Activated CD8-positive, alpha-beta T cell treated with anti-CD3 and anti-CD28 coated beads, Interleukin-2, amount 10 ng/mL, durations not matched to agents 7 days and 5 days (primary cell): ENCODE measurements at regions of chr11 and their contacts with region 1.

Region 1: DNA sequence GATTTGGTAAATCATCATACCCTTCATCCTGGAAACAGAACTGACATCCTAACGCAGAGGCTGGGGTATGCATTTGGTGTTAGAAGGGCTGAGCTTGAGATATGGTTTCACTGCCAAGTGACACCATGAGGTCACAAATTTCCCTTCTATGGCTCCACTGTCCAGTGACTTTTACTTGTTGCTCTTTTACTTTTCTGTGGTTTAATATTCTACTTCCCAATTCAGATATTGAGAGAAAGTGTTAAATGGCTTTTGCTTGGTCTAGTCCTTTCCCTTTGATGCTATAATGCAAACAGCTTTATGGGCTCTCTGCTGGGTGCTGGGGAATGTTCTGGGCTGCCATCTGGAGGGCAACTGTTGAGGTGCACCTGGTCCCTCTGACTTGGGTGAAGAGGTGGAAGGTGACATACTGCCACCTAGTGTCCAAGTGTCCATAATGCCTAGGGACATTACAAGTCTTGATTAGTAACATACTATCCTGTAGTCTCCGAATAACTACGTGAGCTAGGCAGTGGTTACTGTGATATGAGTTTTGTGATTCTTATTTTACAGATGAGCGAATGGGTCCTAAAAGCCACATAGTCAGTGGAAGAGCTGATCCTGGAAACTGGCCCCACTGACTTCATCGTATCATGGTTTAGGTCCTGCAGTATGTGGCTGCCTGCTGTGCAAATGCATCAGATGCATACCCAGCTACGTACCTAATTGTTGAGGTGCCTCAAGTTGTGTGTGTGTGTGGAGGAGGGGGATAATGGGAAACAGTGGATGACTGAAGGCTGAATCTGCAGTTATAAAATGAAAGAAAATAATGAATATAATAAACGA is 149.1 kb upstream of the RAG2 start:
- DNase-seq: peak; percentile 94
- ATAC-seq: peak; percentile 99
- H3K4me3 Mint-ChIP-seq: no peak overlapping the region
- H3K27ac Mint-ChIP-seq: no peak overlapping the region
- H3K4me1 Mint-ChIP-seq: no peaks in the 10 kb centered on the region
- H3K27me3 Mint-ChIP-seq: peaks cover 27% of the 10 kb centered on the region

Region 2: DNA sequence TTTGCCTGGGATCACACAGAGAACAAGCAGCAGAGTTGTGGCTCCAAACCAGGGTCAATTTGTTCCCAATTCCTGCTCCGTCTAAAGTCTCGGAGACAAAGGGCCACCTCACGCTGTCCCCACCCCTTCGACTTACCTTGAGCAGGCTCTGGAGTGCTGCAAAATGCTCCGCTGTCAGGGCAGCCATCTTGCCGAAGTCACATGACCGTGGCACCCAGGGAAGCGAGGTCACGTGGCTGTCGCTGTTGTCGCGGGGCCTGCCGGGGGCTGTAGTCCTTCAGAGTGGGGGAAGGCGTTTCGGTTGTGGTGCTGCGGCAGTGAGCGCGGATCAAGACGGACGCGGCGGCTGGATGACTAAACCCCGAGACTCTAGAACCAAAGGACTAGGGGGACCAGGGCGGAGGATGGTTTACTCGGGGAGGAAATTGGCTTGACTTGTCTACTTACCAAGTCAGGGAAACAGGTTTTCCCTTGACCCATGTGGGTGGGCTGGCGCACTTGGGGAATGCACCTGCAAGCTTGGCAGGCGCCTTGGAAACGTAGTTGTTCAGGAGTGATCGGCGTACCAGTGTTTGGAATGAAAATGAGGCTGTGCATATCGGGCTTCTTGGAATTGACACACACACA is 457.8 kb before region 1 on chr11 and contains the start of gene COMMD9:
- CTCF ChIA-PET with region 1: interaction called, 26 read pairs
- POLR2A ChIA-PET with region 1: no interaction called
- DNase-seq: peak; percentile 97
- ATAC-seq: peak; percentile 99
- H3K4me3 Mint-ChIP-seq: peak within 1 kb of the TSS; percentile 92
- H3K27ac Mint-ChIP-seq: peak within 1 kb of the TSS; percentile 89
- H3K4me1 Mint-ChIP-seq: peaks cover 28% of the 10 kb centered on the region
- H3K27me3 Mint-ChIP-seq: peaks cover 3% of the 10 kb centered on the region
- total RNA-seq, gene COMMD9: 44.6 to 47.5 TPM

Region 3: DNA sequence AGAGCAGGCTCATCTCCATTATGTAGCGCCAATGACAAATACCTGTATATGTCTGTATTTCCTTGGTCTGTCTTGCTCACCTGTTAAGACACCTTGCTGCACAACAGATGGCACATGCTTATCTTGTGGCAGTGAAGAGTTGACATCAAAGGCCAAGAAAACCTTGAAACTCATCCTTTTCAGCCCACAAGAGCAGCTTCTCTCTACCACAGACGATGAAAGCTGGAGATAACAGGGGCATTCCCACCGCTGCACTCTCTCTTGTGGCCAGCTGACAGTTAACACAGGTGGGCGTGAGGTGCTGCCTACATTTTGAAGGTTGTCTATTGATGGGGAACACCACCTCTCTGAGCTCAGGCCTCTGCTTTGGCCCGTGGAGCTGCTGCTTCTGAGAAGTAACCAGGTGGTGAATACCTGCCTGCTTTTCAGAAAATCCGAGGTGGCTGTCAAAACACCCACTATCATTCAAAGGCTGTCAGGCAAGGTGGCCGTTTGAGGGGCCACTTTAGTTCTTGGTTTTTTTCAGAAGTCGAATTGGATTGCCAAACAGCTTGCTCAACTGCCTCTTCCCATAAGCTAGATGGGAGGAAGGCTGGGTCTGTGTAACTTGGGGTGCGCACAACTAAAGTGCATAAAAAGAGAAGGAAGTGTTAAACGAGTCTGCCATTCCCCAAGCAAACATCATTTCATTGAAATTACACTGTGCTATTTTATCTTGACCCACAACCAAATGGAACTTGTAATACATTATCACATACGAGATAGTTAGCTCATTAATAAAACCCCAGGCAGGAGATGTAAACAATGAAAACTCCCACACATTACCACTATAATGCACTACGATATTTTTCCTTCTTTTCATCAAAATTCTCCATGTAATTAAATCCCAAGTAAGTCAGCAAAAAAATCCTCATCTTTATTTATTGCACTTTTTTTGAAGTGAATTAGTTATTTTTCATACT is 62.0 kb before region 1 on chr11:
- CTCF ChIA-PET with region 1: interaction called, 12 read pairs
- POLR2A ChIA-PET with region 1: no interaction called
- DNase-seq: peak; percentile 42
- ATAC-seq: peak; percentile 47
- H3K4me3 Mint-ChIP-seq: no peak overlapping the region
- H3K27ac Mint-ChIP-seq: no peak overlapping the region
- H3K4me1 Mint-ChIP-seq: peaks cover 11% of the 10 kb centered on the region
- H3K27me3 Mint-ChIP-seq: peaks cover 50% of the 10 kb centered on the region

Region 4: GRCh38 chr11:36711106-36711825 is 35.8 kb before region 1 on chr11:
- CTCF ChIA-PET with region 1: interaction called, 10 read pairs
- POLR2A ChIA-PET with region 1: no interaction called
- DNase-seq: no peak
- ATAC-seq: no peak
- H3K4me3 Mint-ChIP-seq: no peak overlapping the region
- H3K27ac Mint-ChIP-seq: no peak overlapping the region
- H3K4me1 Mint-ChIP-seq: no peaks in the 10 kb centered on the region
- H3K27me3 Mint-ChIP-seq: peaks cover 11% of the 10 kb centered on the region

Region 5: GRCh38 chr11:36729825-36730224 is 17.3 kb before region 1 on chr11:
- CTCF ChIA-PET with region 1: interaction called, 94 read pairs
- POLR2A ChIA-PET with region 1: interaction called, 3 read pairs
- DNase-seq: no peak
- ATAC-seq: no peak
- H3K4me3 Mint-ChIP-seq: no peak overlapping the region
- H3K27ac Mint-ChIP-seq: no peak overlapping the region
- H3K4me1 Mint-ChIP-seq: no peaks in the 10 kb centered on the region
- H3K27me3 Mint-ChIP-seq: peaks cover 2% of the 10 kb centered on the region